ENCODE measurements at regions of chr6 and their contacts with region 1.

Region 1: GRCh38 chr6:27177485-27178406 is 69.8 kb upstream of the PRSS16 start:
- DNase-seq: peak; percentile 93
- H3K4me3 ChIP-seq: peak overlapping the region; percentile 98
- H3K27ac ChIP-seq: peak overlapping the region; percentile 86
- H3K4me1 ChIP-seq: no peaks in the 10 kb centered on the region
- H3K27me3 ChIP-seq: no peaks in the 10 kb centered on the region
- CTCF ChIP-seq: peak; percentile 58

Region 2: DNA sequence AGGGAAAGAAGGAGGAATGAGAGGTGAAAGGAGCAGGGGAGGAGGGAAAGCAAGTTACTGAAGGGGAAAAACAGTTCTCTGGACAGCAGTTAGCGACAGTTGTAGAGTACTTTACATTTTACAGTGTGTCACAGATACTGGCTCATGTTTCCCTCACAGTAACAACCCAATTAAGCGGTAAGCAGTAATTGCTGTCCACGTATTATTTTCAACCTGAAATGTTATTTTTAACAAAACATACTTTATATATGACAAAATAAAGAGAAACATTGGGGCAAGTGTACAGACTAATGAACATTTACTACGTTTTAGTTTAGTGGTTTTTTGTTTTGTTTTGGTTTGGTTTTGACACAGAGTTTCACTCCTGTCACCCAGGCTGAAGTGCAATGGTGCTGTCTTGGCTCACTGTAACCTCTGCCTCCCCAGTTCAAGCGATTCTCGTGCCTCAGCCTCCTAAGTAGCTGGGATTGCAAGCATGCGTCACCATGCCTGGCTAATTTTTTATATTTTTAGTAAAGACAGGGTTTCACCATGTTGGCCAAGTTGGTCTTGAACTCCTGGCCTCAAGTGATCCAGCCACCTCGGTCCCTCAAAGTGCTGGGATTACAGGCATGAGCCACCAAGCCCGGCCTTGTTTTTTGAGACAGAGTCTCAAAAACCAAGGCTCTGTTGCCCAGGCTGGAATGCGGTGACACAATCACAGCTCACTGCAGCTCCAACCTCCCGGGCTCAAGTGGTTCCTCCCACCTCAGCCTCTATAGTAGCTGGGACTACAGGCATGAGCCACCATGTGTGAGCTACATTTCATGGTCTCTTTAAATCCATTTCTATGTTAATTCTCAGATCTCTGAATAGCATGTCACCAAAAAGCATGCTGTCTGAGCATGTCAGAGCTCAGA is 835.4 kb before region 1 on chr6:
- CTCF ChIA-PET with region 1: interaction called, 19 read pairs
- POLR2A ChIA-PET with region 1: no interaction called
- intact Hi-C with region 1: no loop called
- DNase-seq: no peak
- H3K4me3 ChIP-seq: peak overlapping the region; percentile 34
- H3K27ac ChIP-seq: no peak overlapping the region
- H3K4me1 ChIP-seq: peaks cover 4% of the 10 kb centered on the region
- H3K27me3 ChIP-seq: no peaks in the 10 kb centered on the region
- CTCF ChIP-seq: no peak

Region 3: DNA sequence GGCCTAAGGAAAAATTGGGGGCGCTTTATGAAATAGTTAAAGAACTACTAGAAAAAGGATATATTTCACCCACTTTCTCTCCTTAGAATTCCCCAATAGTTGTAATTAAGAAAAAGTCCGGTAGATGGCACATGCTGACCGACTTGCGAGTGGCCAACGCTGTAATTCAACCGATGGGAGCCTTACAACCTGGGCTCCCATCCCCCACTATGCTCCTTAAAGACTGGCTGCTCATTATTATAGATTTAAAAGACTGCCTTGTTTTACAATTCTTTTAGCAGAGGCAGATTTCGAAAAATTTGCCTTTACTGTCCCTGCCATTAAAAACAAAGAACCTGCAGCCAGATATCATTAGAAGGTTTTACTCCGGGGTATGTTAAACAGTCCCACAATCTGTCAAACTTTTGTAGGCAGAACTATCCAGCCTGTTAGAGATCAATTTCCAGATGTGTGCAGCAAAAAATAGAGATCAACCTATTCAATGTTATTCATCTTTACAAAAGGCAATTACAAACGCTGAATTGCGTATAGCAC is 11.2 kb after region 1 on chr6:
- CTCF ChIA-PET with region 1: no interaction called
- POLR2A ChIA-PET with region 1: no interaction called
- intact Hi-C with region 1: no loop called
- DNase-seq: peak; percentile 87
- H3K4me3 ChIP-seq: peak overlapping the region; percentile 59
- H3K27ac ChIP-seq: peak overlapping the region; percentile 5
- H3K4me1 ChIP-seq: no peaks in the 10 kb centered on the region
- H3K27me3 ChIP-seq: no peaks in the 10 kb centered on the region
- CTCF ChIP-seq: peak; percentile 67

Region 4: DNA sequence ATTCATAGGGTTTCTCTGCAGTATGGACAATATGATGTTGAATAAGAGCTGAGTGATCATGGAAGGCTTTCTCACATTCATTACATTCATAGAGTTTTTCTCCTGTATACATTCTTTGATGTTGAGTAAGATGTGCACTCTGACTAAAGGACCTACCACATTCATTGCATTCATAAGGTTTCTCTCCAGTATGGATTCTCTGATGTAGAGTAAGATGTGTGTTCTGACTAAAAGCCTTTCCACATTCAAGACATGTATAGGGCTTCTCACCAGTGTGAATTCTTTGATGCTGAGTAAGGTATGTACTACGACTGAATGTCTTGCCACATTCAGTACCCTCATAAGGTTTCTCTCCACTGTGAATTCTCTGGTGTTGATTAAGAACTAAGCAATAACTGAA is 181.5 kb after region 1 on chr6:
- CTCF ChIA-PET with region 1: no interaction called
- POLR2A ChIA-PET with region 1: no interaction called
- intact Hi-C with region 1: no loop called
- DNase-seq: no peak
- H3K4me3 ChIP-seq: no peak overlapping the region
- H3K27ac ChIP-seq: no peak overlapping the region
- H3K4me1 ChIP-seq: no peaks in the 10 kb centered on the region
- H3K27me3 ChIP-seq: no peaks in the 10 kb centered on the region
- CTCF ChIP-seq: no peak

Region 5: GRCh38 chr6:27472617-27473400 is 295.1 kb after region 1 on chr6 and contains the start of gene ZNF184:
- CTCF ChIA-PET with region 1: no interaction called
- POLR2A ChIA-PET with region 1: no interaction called
- intact Hi-C with region 1: loop called (anchors 10 kb)
- DNase-seq: peak; percentile 97
- H3K4me3 ChIP-seq: peak within 1 kb of the TSS; percentile 76
- H3K27ac ChIP-seq: peak within 1 kb of the TSS; percentile 84
- H3K4me1 ChIP-seq: peaks cover 11% of the 10 kb centered on the region
- H3K27me3 ChIP-seq: no peaks in the 10 kb centered on the region
- CTCF ChIP-seq: no peak; the same call in 1 of the 2 replicates
- total RNA-seq, gene ZNF184: 16.8 and 19.1 TPM in 2 replicates

Region 6: DNA sequence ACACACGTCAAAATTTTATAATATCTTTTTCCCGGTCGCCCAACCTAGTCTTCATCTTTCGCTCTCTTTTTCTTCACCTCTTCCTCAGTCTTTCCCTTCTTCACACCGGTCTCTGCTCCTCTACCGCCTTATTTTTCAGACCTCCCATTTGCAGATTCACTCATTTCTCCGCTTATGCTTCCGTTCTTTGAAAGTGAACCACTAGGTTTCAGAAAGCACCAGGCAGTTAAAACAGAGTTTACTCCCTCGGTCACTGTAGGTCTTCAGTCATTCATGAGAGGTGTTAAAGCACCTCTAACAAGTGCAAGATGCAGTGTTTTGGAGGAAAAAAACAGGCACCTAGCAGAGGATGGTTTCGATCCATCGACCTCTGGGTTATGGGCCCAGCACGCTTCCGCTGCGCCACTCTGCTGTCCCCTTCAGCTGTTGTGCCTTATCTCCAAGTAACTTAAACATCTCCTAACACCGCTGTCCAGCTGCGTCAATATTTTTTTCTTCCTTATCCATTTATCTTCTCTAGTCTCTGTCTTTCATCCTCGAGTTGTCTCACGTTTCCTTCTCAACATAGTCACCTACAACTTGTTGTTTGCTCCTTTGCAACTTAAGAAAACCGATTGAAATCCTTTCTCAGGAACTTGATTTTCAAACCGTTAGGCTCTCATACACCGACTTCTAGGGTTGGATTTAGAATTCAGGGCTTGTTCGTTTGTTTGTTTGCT is 414.9 kb after region 1 on chr6:
- CTCF ChIA-PET with region 1: interaction called, 3 read pairs
- POLR2A ChIA-PET with region 1: no interaction called
- intact Hi-C with region 1: loop called (anchors 5 kb)
- DNase-seq: peak; percentile 94
- H3K4me3 ChIP-seq: peak overlapping the region; percentile 51
- H3K27ac ChIP-seq: no peak overlapping the region
- H3K4me1 ChIP-seq: no peaks in the 10 kb centered on the region
- H3K27me3 ChIP-seq: no peaks in the 10 kb centered on the region
- CTCF ChIP-seq: no peak